Thyroid gland (tissue), 4 donors: ENCODE measurements at regions of chr1 and their contacts with region 1.

Region 1: GRCh38 chr1:160018900-160019299 is 12.9 kb downstream of the PIGM start:
- DNase-seq: no peak
- H3K4me3 ChIP-seq: no peak overlapping the region
- H3K27ac ChIP-seq: no peak overlapping the region
- H3K4me1 ChIP-seq: no peaks in the 10 kb centered on the region
- H3K27me3 ChIP-seq: no peaks in the 10 kb centered on the region
- CTCF ChIP-seq: no peak
- POLR2A ChIP-seq: no peak

Region 2: GRCh38 chr1:159798893-159799292 is 220.0 kb before region 1 on chr1:
- intact Hi-C with region 1: loop called (anchors 10 kb)
- DNase-seq: peak; percentile 53 to 62
- H3K4me3 ChIP-seq: no peak overlapping the region
- H3K27ac ChIP-seq: peak overlapping the region in 2 of 3 donors; percentile 25 to 53
- H3K4me1 ChIP-seq: peaks cover 7 to 15% of the 10 kb centered on the region in 2 donors
- H3K27me3 ChIP-seq: no peaks in the 10 kb centered on the region
- CTCF ChIP-seq: peak in 5 of 6 experiments; percentile 19 to 71 (median 57)
- POLR2A ChIP-seq: no peak